CD4-positive, alpha-beta memory T cell (primary cell): ENCODE measurements at regions of chr1 and their contacts with region 1.

Region 1: DNA sequence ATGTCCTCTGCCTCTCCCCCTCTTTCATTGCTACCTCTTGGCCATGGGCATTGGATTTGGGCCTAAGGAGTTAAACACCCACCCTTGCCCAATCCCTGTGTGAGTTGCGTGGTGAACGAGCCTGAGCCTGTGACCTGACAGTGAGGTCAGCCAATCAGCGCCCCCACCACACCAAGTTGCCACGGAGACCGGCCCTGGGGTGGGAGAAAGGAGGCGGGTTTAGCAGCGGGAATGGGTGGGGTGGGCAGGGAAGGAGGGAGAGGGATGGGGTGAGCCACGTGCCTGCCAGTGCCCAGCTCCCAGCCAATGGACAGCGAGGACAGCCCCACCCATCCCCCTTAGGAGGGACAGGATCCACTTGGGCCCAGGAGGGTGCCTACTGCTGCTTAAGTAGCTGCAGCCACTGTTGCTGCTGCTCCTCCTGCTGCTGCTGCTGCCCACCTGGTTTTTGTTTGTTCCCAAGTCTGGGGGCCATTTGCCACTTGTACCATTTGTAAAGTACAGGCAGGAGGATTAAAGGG is 9.5 kb downstream of the ZBTB7B start:
- DNase-seq: peak in 2 of 5 donors; percentile 19 to 41
- H3K4me3 ChIP-seq: peak overlapping the region; percentile 4 to 20
- H3K4me3 Mint-ChIP-seq: peak overlapping the region; percentile 72 to 98 (median 88)
- H3K27ac ChIP-seq: peak overlapping the region; percentile 86
- H3K27ac Mint-ChIP-seq: peak overlapping the region; percentile 62 to 97 (median 94)
- H3K4me1 ChIP-seq: peaks cover 91% of the 10 kb centered on the region
- H3K4me1 Mint-ChIP-seq: peaks cover 39 to 93% (median 62%) of the 10 kb centered on the region in 4 donors
- H3K27me3 ChIP-seq: no peaks in the 10 kb centered on the region
- H3K27me3 Mint-ChIP-seq: no peaks in the 10 kb centered on the region

Region 2: GRCh38 chr1:155022927-155023236 is 10.8 kb after region 1 on chr1:
- CTCF ChIA-PET with region 1: interaction called, 381 read pairs
- POLR2A ChIA-PET with region 1: interaction called, 78 read pairs
- intact Hi-C with region 1: no loop called
- DNase-seq: no peak
- H3K4me3 ChIP-seq: no peak overlapping the region
- H3K4me3 Mint-ChIP-seq: no peak overlapping the region
- H3K27ac ChIP-seq: no peak overlapping the region
- H3K27ac Mint-ChIP-seq: peak overlapping the region in 3 of 7 donors; percentile 72 to 85 (median 81)
- H3K4me1 ChIP-seq: peaks cover 8% of the 10 kb centered on the region
- H3K4me1 Mint-ChIP-seq: peaks cover 19 to 35% (median 23%) of the 10 kb centered on the region in 4 donors
- H3K27me3 ChIP-seq: no peaks in the 10 kb centered on the region
- H3K27me3 Mint-ChIP-seq: no peaks in the 10 kb centered on the region

Region 3: DNA sequence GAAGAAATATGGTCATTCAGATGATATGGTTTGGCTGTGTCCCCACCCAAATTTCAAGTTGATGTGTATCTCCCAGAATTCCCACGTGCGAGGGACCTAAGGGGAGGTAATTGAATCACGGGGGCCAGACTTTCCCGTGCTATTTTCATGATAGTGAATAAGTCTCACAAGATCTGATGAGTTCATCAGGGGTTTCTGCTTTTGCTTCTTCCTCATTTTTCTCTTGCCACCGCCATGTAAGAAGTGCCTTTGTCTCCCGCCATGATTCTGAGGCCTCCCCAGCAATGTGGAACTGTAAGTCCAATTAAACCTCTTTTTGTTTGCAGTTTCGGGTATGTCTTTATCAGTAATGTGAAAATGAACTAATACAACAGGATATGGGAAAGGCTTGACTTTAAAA is 129.7 kb after region 1 on chr1:
- CTCF ChIA-PET with region 1: no interaction called
- POLR2A ChIA-PET with region 1: no interaction called
- intact Hi-C with region 1: no loop called
- DNase-seq: no peak
- H3K4me3 ChIP-seq: no peak overlapping the region
- H3K4me3 Mint-ChIP-seq: peak overlapping the region in 3 of 8 donors; percentile 29 to 45 (median 40)
- H3K27ac ChIP-seq: no peak overlapping the region
- H3K27ac Mint-ChIP-seq: no peak overlapping the region
- H3K4me1 ChIP-seq: peaks cover 27% of the 10 kb centered on the region
- H3K4me1 Mint-ChIP-seq: peaks cover 17 to 37% (median 28%) of the 10 kb centered on the region in 4 donors
- H3K27me3 ChIP-seq: no peaks in the 10 kb centered on the region
- H3K27me3 Mint-ChIP-seq: peaks cover 6 to 13% of the 10 kb centered on the region in 2 donors